Left cardiac atrium (tissue), 4 donors: ENCODE measurements at regions of chr6 and their contacts with region 1.

Region 1: GRCh38 chr6:11575408-11576033 is 38.0 kb downstream of the TMEM170B start:
- DNase-seq: peak; percentile 34
- ATAC-seq: peak; percentile 95 to 99

Region 2: GRCh38 chr6:11144393-11144851 is 431.1 kb before region 1 on chr6:
- intact Hi-C with region 1: loop called in 1 of 2 experiments (anchors 5 kb)
- DNase-seq: peak; percentile 84
- ATAC-seq: peak; percentile 92 to 95

Region 3: DNA sequence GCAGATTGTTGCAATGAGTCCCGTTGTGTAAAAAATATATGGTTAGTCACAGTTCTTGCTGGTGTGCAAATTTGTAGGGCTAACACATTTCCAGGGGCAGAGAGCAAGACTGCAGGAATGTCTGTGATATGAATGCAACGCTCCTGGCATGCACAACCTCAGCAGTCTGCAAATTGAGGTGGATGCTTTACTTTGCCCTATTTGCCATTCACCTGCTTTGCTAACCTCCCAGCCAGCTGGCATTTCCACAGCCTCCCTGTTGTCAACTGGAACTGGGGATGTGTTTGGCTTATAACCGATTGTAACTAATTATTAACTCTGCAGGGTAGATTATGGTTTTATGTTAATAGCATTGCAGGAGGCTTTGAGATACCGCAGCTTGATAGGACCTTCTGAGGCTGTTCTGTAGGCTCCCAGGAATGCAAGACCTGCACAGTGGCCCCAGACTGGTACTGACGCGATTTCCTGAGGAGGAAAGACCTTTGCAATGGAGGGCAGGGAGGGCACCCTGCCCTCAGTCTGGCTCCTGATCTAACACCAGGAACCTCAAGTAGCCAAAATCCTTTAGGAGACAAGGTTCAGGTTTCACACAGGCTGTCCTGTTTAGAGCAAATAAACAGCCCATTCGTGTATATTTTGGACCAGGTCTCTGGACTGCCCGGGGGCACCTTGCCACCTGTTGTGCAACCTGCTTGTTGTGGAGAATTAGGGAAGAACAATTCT is 768.1 kb after region 1 on chr6:
- intact Hi-C with region 1: no loop called
- DNase-seq: no peak
- ATAC-seq: no peak